CD4-positive, alpha-beta T cell (primary cell): ENCODE measurements at regions of chr2 and their contacts with region 1.

Region 1: GRCh38 chr2:203718087-203718486 is 11.6 kb downstream of the CD28 start:
- DNase-seq: peak in 10 of 14 experiments; percentile 29 to 83 (median 44)
- ATAC-seq: peak; percentile 45
- H3K4me3 ChIP-seq: peak overlapping the region; percentile 21
- H3K4me3 Mint-ChIP-seq: peak overlapping the region; percentile 75
- H3K27ac ChIP-seq: peak overlapping the region; percentile 70 to 72
- H3K27ac Mint-ChIP-seq: peak overlapping the region; percentile 92
- H3K4me1 ChIP-seq: peaks cover 81% of the 10 kb centered on the region
- H3K4me1 Mint-ChIP-seq: peaks cover 97% of the 10 kb centered on the region
- H3K27me3 ChIP-seq: no peaks in the 10 kb centered on the region
- H3K27me3 Mint-ChIP-seq: no peaks in the 10 kb centered on the region
- CTCF ChIP-seq: no peak

Region 2: GRCh38 chr2:203077448-203077847 is 640.6 kb before region 1 on chr2:
- CTCF ChIA-PET with region 1: no interaction called
- POLR2A ChIA-PET with region 1: no interaction called
- intact Hi-C with region 1: no loop called
- DNase-seq: no peak
- ATAC-seq: no peak
- H3K4me3 ChIP-seq: no peak overlapping the region
- H3K4me3 Mint-ChIP-seq: no peak overlapping the region
- H3K27ac ChIP-seq: no peak overlapping the region
- H3K27ac Mint-ChIP-seq: no peak overlapping the region
- H3K4me1 ChIP-seq: no peaks in the 10 kb centered on the region
- H3K4me1 Mint-ChIP-seq: no peaks in the 10 kb centered on the region
- H3K27me3 ChIP-seq: no peaks in the 10 kb centered on the region
- H3K27me3 Mint-ChIP-seq: no peaks in the 10 kb centered on the region
- CTCF ChIP-seq: no peak

Region 3: DNA sequence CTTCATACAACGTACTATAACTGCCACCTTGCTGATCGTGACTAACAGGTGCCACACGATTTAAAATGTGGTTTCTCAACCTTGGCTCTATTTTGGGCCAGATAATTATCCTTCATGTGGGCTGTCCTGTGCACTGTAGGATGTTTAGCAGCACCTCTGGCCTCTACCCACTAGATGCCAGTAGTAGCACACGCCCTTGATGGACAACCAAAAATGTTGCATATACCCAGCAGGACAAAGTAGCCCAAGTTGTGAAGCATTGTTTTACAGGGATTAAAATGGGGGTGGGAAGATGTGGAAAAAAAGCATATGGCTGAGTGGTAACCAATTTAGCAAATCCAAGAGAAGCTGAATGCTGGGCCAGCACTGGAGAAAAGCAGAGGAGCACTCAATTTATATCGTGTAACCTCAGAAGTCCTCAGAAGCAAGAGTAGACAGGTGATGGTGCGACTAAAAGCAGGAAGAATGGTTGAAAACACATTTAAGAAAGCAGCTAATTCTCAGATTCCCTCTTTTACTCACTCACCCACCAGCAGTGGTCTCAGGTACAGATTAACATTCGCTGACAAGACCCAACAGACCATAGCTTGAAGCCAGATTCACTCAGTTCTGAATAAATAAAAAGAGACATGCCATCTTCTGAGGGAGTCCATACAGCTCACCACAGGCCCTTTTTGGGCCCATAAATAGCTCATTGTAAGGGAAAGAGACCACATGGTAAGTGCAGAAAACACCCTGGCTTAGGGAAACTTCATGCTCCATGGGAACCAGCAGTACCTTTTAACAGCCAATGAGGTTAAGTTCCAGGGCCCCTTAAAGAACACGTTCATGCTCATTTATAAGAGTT is 233.6 kb before region 1 on chr2:
- CTCF ChIA-PET with region 1: no interaction called
- POLR2A ChIA-PET with region 1: interaction called, 6 read pairs
- intact Hi-C with region 1: loop called in 1 of 2 experiments (anchors 5 kb)
- DNase-seq: peak; percentile 34 to 83 (median 48)
- ATAC-seq: peak; percentile 98
- H3K4me3 ChIP-seq: no peak overlapping the region
- H3K4me3 Mint-ChIP-seq: no peak overlapping the region
- H3K27ac ChIP-seq: no peak overlapping the region
- H3K27ac Mint-ChIP-seq: no peak overlapping the region
- H3K4me1 ChIP-seq: peaks cover 3% of the 10 kb centered on the region
- H3K4me1 Mint-ChIP-seq: peaks cover 6% of the 10 kb centered on the region
- H3K27me3 ChIP-seq: no peaks in the 10 kb centered on the region
- H3K27me3 Mint-ChIP-seq: no peaks in the 10 kb centered on the region
- CTCF ChIP-seq: peak; percentile 77

Region 4: GRCh38 chr2:203656522-203657287 is 61.4 kb before region 1 on chr2:
- CTCF ChIA-PET with region 1: no interaction called
- POLR2A ChIA-PET with region 1: no interaction called
- intact Hi-C with region 1: no loop called
- DNase-seq: peak in 3 of 14 experiments; percentile 16 to 66 (median 50)
- ATAC-seq: peak; percentile 37
- H3K4me3 ChIP-seq: no peak overlapping the region
- H3K4me3 Mint-ChIP-seq: no peak overlapping the region
- H3K27ac ChIP-seq: no peak overlapping the region
- H3K27ac Mint-ChIP-seq: peak overlapping the region; percentile 14
- H3K4me1 ChIP-seq: peaks cover 9% of the 10 kb centered on the region
- H3K4me1 Mint-ChIP-seq: peaks cover 47% of the 10 kb centered on the region
- H3K27me3 ChIP-seq: no peaks in the 10 kb centered on the region
- H3K27me3 Mint-ChIP-seq: no peaks in the 10 kb centered on the region
- CTCF ChIP-seq: no peak

Region 5: DNA sequence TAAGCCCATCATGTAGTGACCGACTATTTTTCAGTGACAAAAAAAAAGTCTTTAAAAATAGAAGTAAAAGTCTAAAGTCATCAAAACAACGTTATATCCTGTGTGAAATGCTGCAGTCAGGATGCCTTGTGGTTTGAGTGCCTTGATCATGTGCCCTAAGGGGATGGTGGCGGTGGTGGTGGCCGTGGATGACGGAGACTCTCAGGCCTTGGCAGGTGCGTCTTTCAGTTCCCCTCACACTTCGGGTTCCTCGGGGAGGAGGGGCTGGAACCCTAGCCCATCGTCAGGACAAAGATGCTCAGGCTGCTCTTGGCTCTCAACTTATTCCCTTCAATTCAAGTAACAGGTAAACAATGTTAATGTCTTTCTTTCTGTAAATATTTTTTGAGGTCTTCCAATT is 11.7 kb before region 1 on chr2 and contains the start of gene CD28:
- CTCF ChIA-PET with region 1: interaction called, 3 read pairs
- POLR2A ChIA-PET with region 1: interaction called, 284 read pairs
- intact Hi-C with region 1: loop called in 1 of 2 experiments (anchors 1 kb)
- DNase-seq: peak; percentile 78 to 97 (median 86)
- ATAC-seq: peak; percentile 76
- H3K4me3 ChIP-seq: peak within 1 kb of the TSS; percentile 81
- H3K4me3 Mint-ChIP-seq: peak within 1 kb of the TSS; percentile 90
- H3K27ac ChIP-seq: peak within 1 kb of the TSS; percentile 82 to 92
- H3K27ac Mint-ChIP-seq: peak within 1 kb of the TSS; percentile 92
- H3K4me1 ChIP-seq: peaks cover 22% of the 10 kb centered on the region
- H3K4me1 Mint-ChIP-seq: peaks cover 54% of the 10 kb centered on the region
- H3K27me3 ChIP-seq: no peaks in the 10 kb centered on the region
- H3K27me3 Mint-ChIP-seq: no peaks in the 10 kb centered on the region
- CTCF ChIP-seq: no peak
- total RNA-seq, gene CD28: 128 to 130 TPM

Region 6: GRCh38 chr2:203751685-203752271 is 33.7 kb after region 1 on chr2:
- CTCF ChIA-PET with region 1: interaction called, 3 read pairs
- POLR2A ChIA-PET with region 1: interaction called, 621 read pairs
- intact Hi-C with region 1: loop called in 1 of 2 experiments (anchors 1 kb)
- DNase-seq: no peak
- ATAC-seq: no peak
- H3K4me3 ChIP-seq: no peak overlapping the region
- H3K4me3 Mint-ChIP-seq: no peak overlapping the region
- H3K27ac ChIP-seq: no peak overlapping the region
- H3K27ac Mint-ChIP-seq: peak overlapping the region; percentile 46
- H3K4me1 ChIP-seq: peaks cover 34% of the 10 kb centered on the region
- H3K4me1 Mint-ChIP-seq: peaks cover 71% of the 10 kb centered on the region
- H3K27me3 ChIP-seq: no peaks in the 10 kb centered on the region
- H3K27me3 Mint-ChIP-seq: no peaks in the 10 kb centered on the region
- CTCF ChIP-seq: no peak

Region 7: GRCh38 chr2:203804070-203804469 is 86.0 kb after region 1 on chr2:
- CTCF ChIA-PET with region 1: interaction called, 3 read pairs
- POLR2A ChIA-PET with region 1: interaction called, 7 read pairs
- intact Hi-C with region 1: loop called in 1 of 2 experiments (anchors 5 kb)
- DNase-seq: peak in 5 of 14 experiments; percentile 11 to 70 (median 63)
- ATAC-seq: peak; percentile 75
- H3K4me3 ChIP-seq: peak overlapping the region; percentile 3
- H3K4me3 Mint-ChIP-seq: peak overlapping the region; percentile 30
- H3K27ac ChIP-seq: peak overlapping the region in 1 of 2 donors; percentile 46
- H3K27ac Mint-ChIP-seq: peak overlapping the region; percentile 57
- H3K4me1 ChIP-seq: peaks cover 27% of the 10 kb centered on the region
- H3K4me1 Mint-ChIP-seq: peaks cover 72% of the 10 kb centered on the region
- H3K27me3 ChIP-seq: no peaks in the 10 kb centered on the region
- H3K27me3 Mint-ChIP-seq: no peaks in the 10 kb centered on the region
- CTCF ChIP-seq: no peak

Region 8: GRCh38 chr2:203934041-203934492 is 216.0 kb after region 1 on chr2:
- CTCF ChIA-PET with region 1: no interaction called
- POLR2A ChIA-PET with region 1: interaction called, 6 read pairs
- intact Hi-C with region 1: loop called in 1 of 2 experiments (anchors 10 kb)
- DNase-seq: peak in 9 of 14 experiments; percentile 32 to 71 (median 50)
- ATAC-seq: peak; percentile 40
- H3K4me3 ChIP-seq: peak overlapping the region; percentile 19
- H3K4me3 Mint-ChIP-seq: peak overlapping the region; percentile 83
- H3K27ac ChIP-seq: peak overlapping the region; percentile 67 to 82
- H3K27ac Mint-ChIP-seq: peak overlapping the region; percentile 93
- H3K4me1 ChIP-seq: peaks cover 41% of the 10 kb centered on the region
- H3K4me1 Mint-ChIP-seq: peaks cover 72% of the 10 kb centered on the region
- H3K27me3 ChIP-seq: no peaks in the 10 kb centered on the region
- H3K27me3 Mint-ChIP-seq: no peaks in the 10 kb centered on the region
- CTCF ChIP-seq: no peak

Region 9: GRCh38 chr2:204205538-204205937 is 487.5 kb after region 1 on chr2:
- CTCF ChIA-PET with region 1: no interaction called
- POLR2A ChIA-PET with region 1: no interaction called
- intact Hi-C with region 1: no loop called
- DNase-seq: no peak
- ATAC-seq: no peak
- H3K4me3 ChIP-seq: no peak overlapping the region
- H3K4me3 Mint-ChIP-seq: no peak overlapping the region
- H3K27ac ChIP-seq: no peak overlapping the region
- H3K27ac Mint-ChIP-seq: no peak overlapping the region
- H3K4me1 ChIP-seq: no peaks in the 10 kb centered on the region
- H3K4me1 Mint-ChIP-seq: peaks cover 6% of the 10 kb centered on the region
- H3K27me3 ChIP-seq: peaks cover 0 to 5% of the 10 kb centered on the region in 2 experiments
- H3K27me3 Mint-ChIP-seq: peaks cover 6% of the 10 kb centered on the region
- CTCF ChIP-seq: no peak